ENCODE measurements at regions of chr3 and their contacts with region 1.

Region 1: GRCh38 chr3:53375019-53375418 is 27.7 kb upstream of the DCP1A start:
- DNase-seq: peak; percentile 5
- H3K4me3 Mint-ChIP-seq: no peak overlapping the region
- H3K27ac Mint-ChIP-seq: no peak overlapping the region
- H3K4me1 Mint-ChIP-seq: no peaks in the 10 kb centered on the region
- H3K27me3 Mint-ChIP-seq: peaks cover 14% of the 10 kb centered on the region

Region 2: GRCh38 chr3:53303957-53304356 is 71.1 kb before region 1 on chr3:
- intact Hi-C with region 1: loop called (anchors 2 kb)
- DNase-seq: no peak
- H3K4me3 Mint-ChIP-seq: no peak overlapping the region
- H3K27ac Mint-ChIP-seq: no peak overlapping the region
- H3K4me1 Mint-ChIP-seq: peaks cover 7% of the 10 kb centered on the region
- H3K27me3 Mint-ChIP-seq: no peaks in the 10 kb centered on the region

Region 3: DNA sequence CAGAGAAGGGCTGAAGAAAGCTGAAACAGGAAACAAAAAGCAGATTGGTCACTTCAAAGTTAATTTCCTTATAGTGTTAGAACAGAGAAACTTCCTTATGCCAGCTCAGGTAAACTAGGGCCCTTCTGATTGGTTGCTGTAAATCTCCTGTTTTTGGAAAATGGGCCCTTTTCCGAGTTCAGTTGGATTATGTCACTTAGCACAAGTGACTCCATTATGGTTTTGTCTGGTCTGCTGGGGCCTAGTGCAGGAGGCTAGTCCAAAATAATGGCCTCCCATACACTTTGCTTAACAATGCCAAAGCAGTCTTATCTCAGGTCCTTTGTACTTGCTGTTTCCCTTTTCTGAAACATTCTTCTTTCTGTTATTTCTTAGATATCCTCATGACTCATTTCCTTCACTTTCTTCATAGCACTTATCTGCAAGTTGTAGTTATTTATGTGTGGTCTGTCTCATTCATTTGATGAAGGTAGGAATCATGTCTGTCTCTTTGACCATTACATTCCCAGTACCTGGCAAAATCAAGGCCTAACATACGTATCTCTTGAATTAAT is 20.0 kb before region 1 on chr3:
- intact Hi-C with region 1: loop called (anchors 2 kb)
- DNase-seq: no peak
- H3K4me3 Mint-ChIP-seq: no peak overlapping the region
- H3K27ac Mint-ChIP-seq: no peak overlapping the region
- H3K4me1 Mint-ChIP-seq: peaks cover 8% of the 10 kb centered on the region
- H3K27me3 Mint-ChIP-seq: peaks cover 4% of the 10 kb centered on the region

Region 4: DNA sequence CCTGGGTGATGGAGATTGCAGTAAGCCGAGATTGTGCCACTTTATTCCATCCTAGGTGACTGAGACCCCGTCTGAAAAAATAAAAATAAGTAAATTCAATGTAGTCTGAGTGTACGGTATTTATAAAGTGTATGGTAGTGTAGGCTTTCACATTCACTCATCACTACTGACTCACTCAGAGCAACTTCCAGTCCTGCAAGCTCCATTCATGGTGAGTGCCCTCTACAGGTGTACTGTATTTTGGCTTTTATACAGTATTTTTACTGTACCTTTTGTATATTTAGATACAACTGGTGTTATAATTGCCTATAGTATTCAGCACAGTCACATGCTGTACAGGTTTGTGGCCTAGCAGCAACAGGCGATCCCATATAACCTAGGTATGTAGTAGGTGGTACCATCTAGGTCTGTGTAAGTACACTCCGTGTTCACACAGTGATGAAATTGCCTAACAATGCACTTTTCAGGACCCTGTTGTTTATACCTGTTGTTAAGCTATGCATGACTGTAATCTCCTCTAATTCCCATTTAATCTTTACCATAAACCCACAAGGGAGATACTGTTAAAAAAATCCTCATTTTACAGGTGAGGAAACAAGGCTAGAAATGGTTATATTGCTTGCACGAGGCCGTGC is 138.7 kb after region 1 on chr3:
- intact Hi-C with region 1: loop called (anchors 10 kb)
- DNase-seq: no peak
- H3K4me3 Mint-ChIP-seq: no peak overlapping the region
- H3K27ac Mint-ChIP-seq: no peak overlapping the region
- H3K4me1 Mint-ChIP-seq: no peaks in the 10 kb centered on the region
- H3K27me3 Mint-ChIP-seq: peaks cover 7% of the 10 kb centered on the region

Region 5: DNA sequence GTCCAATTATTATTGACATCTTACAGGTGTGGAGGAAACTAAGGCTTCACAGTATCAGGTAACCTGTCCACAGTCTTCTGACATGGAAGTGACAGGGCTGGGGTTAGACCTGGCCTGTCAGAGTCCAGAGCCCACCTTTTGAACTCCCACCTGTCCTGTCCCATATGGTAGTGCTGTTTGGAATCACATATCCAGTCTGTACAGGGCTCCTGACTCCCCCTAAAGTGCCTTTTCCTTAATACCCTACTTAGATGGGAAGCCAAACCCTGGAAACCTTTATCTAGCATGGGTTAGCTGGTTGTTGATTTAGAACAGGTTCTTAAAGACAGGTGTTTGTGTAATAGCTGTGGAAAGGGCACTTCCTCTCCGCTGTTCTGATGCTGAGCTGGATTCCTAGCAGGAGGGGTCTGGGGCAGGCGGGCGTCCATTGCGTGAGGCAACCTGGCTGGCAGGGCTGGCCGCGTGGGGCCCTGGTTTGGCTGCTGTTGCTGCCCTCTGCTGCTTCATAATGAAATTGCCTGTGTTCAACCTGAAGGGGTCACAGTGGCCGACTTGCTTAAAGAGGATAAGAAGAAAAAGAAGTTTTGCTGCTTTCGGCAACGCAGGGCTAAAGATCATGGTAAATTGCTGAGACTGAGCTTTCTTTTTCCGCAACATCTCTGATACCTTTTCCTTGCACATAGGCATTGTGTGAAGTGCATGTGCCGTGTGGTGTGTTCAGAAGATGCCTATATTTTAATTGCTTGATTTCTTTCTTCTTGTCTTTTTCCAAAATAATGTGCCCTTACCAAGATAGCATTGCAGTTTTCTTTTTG is 335.0 kb after region 1 on chr3:
- intact Hi-C with region 1: loop called (anchors 1 kb)
- DNase-seq: peak; percentile 45
- H3K4me3 Mint-ChIP-seq: no peak overlapping the region
- H3K27ac Mint-ChIP-seq: no peak overlapping the region
- H3K4me1 Mint-ChIP-seq: peaks cover 27% of the 10 kb centered on the region
- H3K27me3 Mint-ChIP-seq: peaks cover 7% of the 10 kb centered on the region